Activated CD4-positive, alpha-beta T cell treated with anti-CD3 and anti-CD28 coated beads for 36 hours (primary cell): ENCODE measurements at regions of chr1 and their contacts with region 1.

Region 1: GRCh38 chr1:236534151-236534651 is 10.4 kb downstream of the LGALS8 start:
- DNase-seq: peak; percentile 75
- ATAC-seq: peak; percentile 84
- H3K4me3 Mint-ChIP-seq: peak overlapping the region; percentile 17
- H3K27ac Mint-ChIP-seq: peak overlapping the region; percentile 95
- H3K4me1 Mint-ChIP-seq: peaks cover 46% of the 10 kb centered on the region
- H3K27me3 Mint-ChIP-seq: no peaks in the 10 kb centered on the region

Region 2: GRCh38 chr1:236113324-236114032 is 420.7 kb before region 1 on chr1:
- CTCF ChIA-PET with region 1: no interaction called
- POLR2A ChIA-PET with region 1: no interaction called
- intact Hi-C with region 1: loop called in 1 of 2 experiments (anchors 5 kb)
- DNase-seq: no peak
- ATAC-seq: no peak
- H3K4me3 Mint-ChIP-seq: no peak overlapping the region
- H3K27ac Mint-ChIP-seq: no peak overlapping the region
- H3K4me1 Mint-ChIP-seq: no peaks in the 10 kb centered on the region
- H3K27me3 Mint-ChIP-seq: peaks cover 1% of the 10 kb centered on the region

Region 3: GRCh38 chr1:236523701-236524141 is 10.5 kb before region 1 on chr1 and contains the start of gene LGALS8:
- CTCF ChIA-PET with region 1: interaction called, 5 read pairs
- POLR2A ChIA-PET with region 1: interaction called, 8 read pairs
- intact Hi-C with region 1: loop called (anchors 1 kb)
- DNase-seq: peak; percentile 94
- ATAC-seq: peak; percentile 79
- H3K4me3 Mint-ChIP-seq: peak within 1 kb of the TSS; percentile 99
- H3K27ac Mint-ChIP-seq: peak within 1 kb of the TSS; percentile 98
- H3K4me1 Mint-ChIP-seq: peaks cover 25% of the 10 kb centered on the region
- H3K27me3 Mint-ChIP-seq: no peaks in the 10 kb centered on the region
- total RNA-seq, gene LGALS8: 106 to 155 TPM